Right ventricle myocardium superior (tissue), 1 donor: ENCODE measurements at regions of chr7 and their contacts with region 1.

Region 1: GRCh38 chr7:31735991-31736982 is 49.3 kb downstream of the PPP1R17 start:
- DNase-seq: peak; percentile 51
- ATAC-seq: peak; percentile 81

Region 2: DNA sequence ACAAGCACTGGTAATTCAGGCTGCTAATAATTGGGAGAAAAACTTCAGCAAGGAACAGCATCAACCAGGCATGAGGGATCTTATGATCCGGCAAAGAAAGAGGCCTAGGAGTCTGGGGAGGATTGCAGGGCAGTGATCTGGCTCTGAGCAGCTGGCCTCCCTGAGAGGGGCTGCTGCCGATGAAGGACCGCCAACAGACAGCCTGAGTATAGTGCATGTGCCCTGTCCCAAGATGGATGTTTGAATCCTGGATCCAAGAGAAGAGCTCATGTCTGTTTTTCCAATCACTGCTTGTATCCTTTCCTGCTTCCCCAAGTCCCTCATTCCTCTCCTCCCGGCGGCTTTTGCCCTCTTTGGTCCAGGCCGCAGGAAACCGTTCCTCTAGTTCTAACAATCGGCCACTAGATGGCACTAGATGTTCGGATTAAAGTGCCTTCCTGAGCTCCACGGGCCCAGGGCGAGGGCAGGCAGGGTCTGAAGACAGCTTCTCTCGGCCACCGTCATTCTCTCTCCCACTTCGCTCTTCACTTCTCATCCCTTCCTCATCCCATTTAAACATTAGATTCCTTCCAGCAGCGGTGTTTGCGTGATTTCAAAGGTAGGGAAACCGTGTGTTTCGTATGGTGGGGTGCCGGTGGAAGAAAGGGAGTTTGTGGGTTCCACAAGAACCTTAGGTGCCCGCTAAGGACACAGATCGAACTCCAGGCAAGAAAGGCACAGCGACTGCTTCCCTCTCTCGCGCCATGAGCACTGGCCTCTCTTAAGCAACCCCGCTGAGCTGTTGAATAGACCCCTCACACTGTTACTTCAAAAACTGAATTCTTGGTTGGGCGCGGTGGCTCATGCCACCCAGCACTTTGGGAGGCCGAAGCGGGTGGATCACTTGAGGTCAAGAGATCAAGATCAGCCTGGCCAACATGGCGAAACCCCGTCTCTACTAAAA is 601.8 kb before region 1 on chr7:
- intact Hi-C with region 1: loop called (anchors 10 kb)
- DNase-seq: peak; percentile 72
- ATAC-seq: peak; percentile 98

Region 3: GRCh38 chr7:31651869-31652268 is 84.4 kb before region 1 on chr7:
- intact Hi-C with region 1: loop called (anchors 10 kb)
- DNase-seq: no peak
- ATAC-seq: no peak